ENCODE measurements at regions of chr18 and their contacts with region 1.

Region 1: DNA sequence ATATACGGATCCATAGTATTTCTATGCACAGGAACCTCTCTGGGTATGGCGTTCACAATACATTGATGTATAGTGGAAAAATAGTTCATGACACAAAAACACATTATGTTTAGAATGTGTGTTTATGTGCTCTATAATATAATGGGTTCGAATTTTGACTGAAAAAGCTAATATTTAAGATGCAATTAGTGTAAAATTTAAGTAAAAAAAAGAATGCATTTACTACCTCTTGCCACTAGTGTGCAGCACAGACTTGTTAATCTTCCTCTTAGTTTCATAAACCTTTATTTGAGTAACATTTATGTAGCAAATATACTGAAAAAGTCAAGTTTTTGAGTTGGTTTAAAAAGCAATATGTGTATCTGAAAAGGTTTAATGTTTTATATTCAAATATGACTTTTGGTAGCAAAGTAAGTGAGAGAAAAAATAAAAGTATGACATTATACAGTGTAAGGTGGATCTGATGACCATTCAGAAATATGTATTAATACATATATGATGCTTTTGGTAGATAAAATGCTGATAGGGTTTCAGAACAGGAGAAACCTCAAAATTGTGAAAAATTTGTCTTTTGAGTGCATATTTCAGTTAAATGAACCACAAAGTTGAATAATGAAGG is 49.4 kb downstream of the CCDC102B start:
- DNase-seq: no peak
- ATAC-seq: peak; percentile 33; the same call in 1 of the 3 replicates
- H3K4me3 ChIP-seq: no peak overlapping the region
- H3K27ac ChIP-seq: no peak overlapping the region
- H3K4me1 ChIP-seq: no peaks in the 10 kb centered on the region
- H3K27me3 ChIP-seq: no peaks in the 10 kb centered on the region
- CTCF ChIP-seq: peak; percentile 46 to 64 (median 50); a peak in 4 of 6 replicates
- EP300 ChIP-seq: no peak
- POLR2A ChIP-seq: no peak
- RAD21 ChIP-seq: peak; percentile 67

Region 2: DNA sequence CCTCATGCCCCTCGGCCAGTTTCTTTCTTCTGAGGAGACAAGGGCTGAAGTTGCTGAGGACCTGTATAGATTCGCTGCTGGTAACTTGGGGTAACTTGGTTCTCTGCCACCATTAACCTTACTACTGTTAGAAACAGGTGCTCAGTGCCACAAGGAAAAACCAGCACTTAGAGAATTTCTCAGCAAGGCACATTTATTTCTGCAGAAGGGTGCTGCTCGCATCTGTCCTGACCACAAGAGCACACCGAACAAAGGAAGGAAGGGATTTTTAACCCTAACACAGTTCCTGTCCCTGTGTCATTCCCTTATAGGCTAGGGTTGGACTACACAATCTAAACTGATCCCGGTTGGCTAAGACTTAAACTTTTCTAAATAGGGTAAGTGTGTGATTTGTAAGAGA is 1595.6 kb after region 1 on chr18:
- CTCF ChIA-PET with region 1: no interaction called
- POLR2A ChIA-PET with region 1: no interaction called
- RAD21 ChIA-PET with region 1: no interaction called
- SMC1A ChIA-PET with region 1: no interaction called
- in situ Hi-C with region 1: loop called (anchors 10 kb)
- intact Hi-C with region 1: no loop called
- DNase-seq: no peak
- ATAC-seq: no peak
- H3K4me3 ChIP-seq: no peak overlapping the region
- H3K27ac ChIP-seq: no peak overlapping the region
- H3K4me1 ChIP-seq: no peaks in the 10 kb centered on the region
- H3K27me3 ChIP-seq: no peaks in the 10 kb centered on the region; a peak in 1 of 4 replicates
- CTCF ChIP-seq: no peak
- EP300 ChIP-seq: no peak
- POLR2A ChIP-seq: no peak
- RAD21 ChIP-seq: no peak

Measured in GM12878 (cell line).